ENCODE measurements at regions of chr17 and their contacts with region 1.

Region 1: GRCh38 chr17:8383143-8383822 is at the start of gene RPL26:
- DNase-seq: peak; percentile 97
- H3K4me3 ChIP-seq: peak within 1 kb of the TSS; percentile 86 to 99 (median 91)
- H3K27ac ChIP-seq: peak within 1 kb of the TSS; percentile 84
- H3K4me1 ChIP-seq: peaks cover 34% of the 10 kb centered on the region
- H3K27me3 ChIP-seq: no peaks in the 10 kb centered on the region
- CTCF ChIP-seq: peak; percentile 78 to 86
- total RNA-seq, gene RPL26: 1,799 to 2,054 TPM

Region 2: GRCh38 chr17:8248751-8249607 is 134.3 kb before region 1 on chr17 and contains the start of gene PFAS:
- CTCF ChIA-PET with region 1: no interaction called
- dilution Hi-C with region 1: no loop called
- in situ Hi-C with region 1: no loop called
- intact Hi-C with region 1: loop called (anchors 2 kb)
- DNase-seq: peak; percentile 93
- H3K4me3 ChIP-seq: peak within 1 kb of the TSS; percentile 82 to 96 (median 89)
- H3K27ac ChIP-seq: peak within 1 kb of the TSS; percentile 92
- H3K4me1 ChIP-seq: peaks cover 12% of the 10 kb centered on the region
- H3K27me3 ChIP-seq: no peaks in the 10 kb centered on the region
- CTCF ChIP-seq: no peak
- total RNA-seq, gene PFAS: 8.5 to 31.2 TPM

Region 3: DNA sequence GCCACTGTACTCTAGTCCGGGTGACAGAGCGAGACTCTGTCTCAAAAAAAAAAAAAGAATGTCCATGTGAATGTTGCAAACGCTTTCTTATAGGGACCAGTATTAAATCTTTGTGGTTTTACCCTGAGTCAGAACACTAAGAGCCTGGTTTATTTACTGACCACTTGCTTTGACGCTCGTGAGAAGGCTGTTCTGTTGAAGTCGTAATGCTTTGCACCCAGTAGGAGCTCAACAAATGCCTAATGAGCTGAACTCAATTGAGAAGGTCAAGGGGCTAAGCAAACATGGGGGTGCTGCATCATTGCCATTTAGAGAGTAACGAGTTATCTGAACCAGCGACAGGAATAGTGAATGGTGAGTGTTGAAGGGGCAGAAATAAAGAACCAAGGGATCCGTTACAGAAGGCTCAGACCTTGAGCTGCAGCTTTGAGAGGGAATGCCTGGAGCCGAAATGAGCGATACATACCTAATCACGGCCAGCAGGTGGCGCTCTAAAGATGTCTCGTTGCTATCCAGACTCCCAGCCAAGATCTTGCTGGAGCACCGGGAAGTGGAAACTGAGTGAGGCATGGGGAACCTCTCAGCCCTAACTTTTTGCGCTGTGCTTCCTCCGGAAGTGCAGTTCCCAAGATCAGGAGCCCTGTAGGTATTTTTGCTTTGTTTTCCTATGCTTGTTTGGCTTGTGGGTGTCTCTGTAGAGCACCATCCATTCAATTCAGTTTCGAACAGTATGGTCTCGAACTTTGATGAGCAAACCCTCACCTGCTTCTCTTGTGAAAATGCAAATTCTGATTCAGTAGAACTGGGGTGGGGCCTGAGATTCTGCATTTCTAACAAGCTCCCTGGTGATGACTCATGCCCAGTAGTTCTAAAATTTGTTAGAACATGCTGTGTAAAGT is 26.9 kb after region 1 on chr17:
- CTCF ChIA-PET with region 1: no interaction called
- dilution Hi-C with region 1: no loop called
- in situ Hi-C with region 1: no loop called
- intact Hi-C with region 1: loop called (anchors 1 kb)
- DNase-seq: peak; percentile 89
- H3K4me3 ChIP-seq: peak overlapping the region; percentile 2 to 30 (median 24)
- H3K27ac ChIP-seq: peak overlapping the region; percentile 31
- H3K4me1 ChIP-seq: peaks cover 16% of the 10 kb centered on the region
- H3K27me3 ChIP-seq: no peaks in the 10 kb centered on the region
- CTCF ChIP-seq: peak; percentile 81 to 87

Region 4: DNA sequence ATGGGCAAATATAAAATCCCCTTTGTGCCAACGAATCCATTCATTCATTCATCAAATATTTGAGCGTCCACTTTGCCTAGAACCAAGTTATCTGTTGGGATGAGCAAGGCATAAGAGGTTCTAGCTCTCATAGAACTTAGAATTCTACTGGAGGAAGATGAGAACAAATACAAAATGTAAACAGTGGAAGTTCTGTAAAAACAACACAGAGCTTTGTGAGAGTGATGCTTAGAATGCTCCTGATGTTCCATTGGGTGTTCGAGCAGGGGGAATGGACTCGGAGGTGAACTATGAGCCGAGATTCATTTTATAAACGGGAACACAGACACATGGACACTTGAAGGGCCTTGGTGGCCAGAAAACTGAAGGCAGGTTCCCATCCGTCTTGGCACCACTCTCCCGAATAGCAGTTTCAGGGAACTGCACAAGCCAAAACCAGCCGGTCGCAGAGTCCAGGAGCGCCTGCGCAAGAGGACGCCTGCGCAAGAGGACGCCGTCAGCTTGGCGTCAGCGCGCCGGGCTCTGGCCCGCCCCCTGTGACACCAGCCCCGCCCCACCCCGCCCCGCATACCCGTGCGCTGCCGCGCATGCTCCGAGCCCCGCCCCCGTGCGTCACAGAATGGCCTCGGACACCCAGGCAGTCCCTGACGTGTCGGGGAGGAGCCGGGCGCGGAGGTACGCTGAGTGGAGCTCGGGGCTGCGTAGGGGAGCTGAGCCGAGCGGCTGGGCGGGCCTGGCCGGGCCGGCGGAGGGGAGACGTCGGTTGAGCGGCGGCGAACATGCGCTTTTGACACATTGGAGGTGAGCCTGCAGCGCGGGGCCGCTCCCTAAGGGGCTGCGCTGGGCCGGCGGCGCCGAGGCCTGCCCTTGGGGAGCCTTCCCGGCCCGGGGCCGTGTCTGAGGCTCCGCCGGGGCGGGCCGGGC is 52.2 kb after region 1 on chr17 and contains the start of gene NDEL1:
- CTCF ChIA-PET with region 1: interaction called, 5 read pairs
- dilution Hi-C with region 1: no loop called
- in situ Hi-C with region 1: no loop called
- intact Hi-C with region 1: loop called (anchors 1 kb)
- DNase-seq: peak; percentile 98
- H3K4me3 ChIP-seq: peak within 1 kb of the TSS; percentile 73 to 84 (median 82)
- H3K27ac ChIP-seq: peak within 1 kb of the TSS; percentile 99
- H3K4me1 ChIP-seq: peaks cover 15% of the 10 kb centered on the region
- H3K27me3 ChIP-seq: no peaks in the 10 kb centered on the region
- CTCF ChIP-seq: no peak
- total RNA-seq, gene NDEL1: 55.7 to 102 TPM

Region 5: GRCh38 chr17:8745586-8746500 is 362.6 kb after region 1 on chr17:
- CTCF ChIA-PET with region 1: no interaction called
- dilution Hi-C with region 1: no loop called
- in situ Hi-C with region 1: loop called in 1 of 2 experiments (anchors 25 kb)
- intact Hi-C with region 1: loop called (anchors 1 kb)
- DNase-seq: peak; percentile 22
- H3K4me3 ChIP-seq: peak overlapping the region; percentile 47 to 65 (median 56)
- H3K27ac ChIP-seq: no peak overlapping the region
- H3K4me1 ChIP-seq: peaks cover 5% of the 10 kb centered on the region
- H3K27me3 ChIP-seq: no peaks in the 10 kb centered on the region
- CTCF ChIP-seq: peak; percentile 25 to 82

Region 6: GRCh38 chr17:8894673-8895578 is 511.6 kb after region 1 on chr17:
- CTCF ChIA-PET with region 1: no interaction called
- dilution Hi-C with region 1: no loop called
- in situ Hi-C with region 1: no loop called
- intact Hi-C with region 1: loop called (anchors 1 kb)
- DNase-seq: peak; percentile 55
- H3K4me3 ChIP-seq: no peak overlapping the region
- H3K27ac ChIP-seq: no peak overlapping the region
- H3K4me1 ChIP-seq: no peaks in the 10 kb centered on the region
- H3K27me3 ChIP-seq: no peaks in the 10 kb centered on the region
- CTCF ChIP-seq: peak; percentile 76 to 80